PC-9 (cell line): ENCODE measurements at regions of chr17 and their contacts with region 1.

Region 1: DNA sequence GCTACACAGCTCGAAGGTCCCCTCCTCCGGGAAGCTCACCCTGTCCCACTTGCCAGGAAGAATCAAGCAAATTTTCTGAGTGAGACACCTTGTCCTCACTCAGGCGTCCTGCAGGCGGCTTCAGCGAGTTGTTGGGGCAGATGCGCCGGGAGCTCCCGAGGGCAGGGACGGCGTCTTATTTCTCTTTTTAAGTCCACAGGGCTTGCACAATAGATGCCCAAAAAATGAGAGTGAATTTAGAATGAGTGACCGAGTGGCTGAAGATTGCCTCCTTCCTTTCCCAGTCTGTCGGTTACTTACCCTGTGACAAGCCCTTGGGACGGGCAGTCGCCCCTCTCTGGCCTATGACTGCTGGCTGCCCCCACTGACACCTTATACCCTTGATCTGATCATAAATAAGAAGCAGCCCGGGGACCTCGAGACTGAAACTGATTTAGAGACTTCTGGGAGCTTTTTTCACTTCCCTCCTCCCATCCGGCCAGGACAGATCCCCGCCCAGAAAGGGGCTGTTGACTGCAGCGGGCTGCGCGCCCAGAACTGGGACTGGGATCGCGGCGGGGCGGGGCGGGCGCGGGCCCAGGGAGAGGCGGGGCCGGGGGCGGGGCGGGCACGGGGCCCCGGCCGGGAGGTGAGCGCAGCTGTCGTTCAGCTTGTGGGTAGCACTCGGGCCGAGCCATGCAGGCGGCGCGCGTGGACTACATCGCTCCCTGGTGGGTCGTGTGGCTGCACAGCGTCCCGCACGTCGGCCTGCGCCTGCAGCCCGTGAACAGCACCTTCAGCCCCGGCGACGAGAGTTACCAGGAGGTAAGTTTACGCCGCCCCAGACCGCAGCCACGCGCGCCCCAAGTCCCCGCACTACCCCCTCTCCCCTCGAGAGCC is at the start of gene TTYH2:
- DNase-seq: peak; percentile 70 to 83
- H3K4me3 ChIP-seq: peak within 1 kb of the TSS; percentile 64; the same call in 1 of the 2 replicates
- H3K27ac ChIP-seq: no peak within 1 kb of the TSS
- H3K4me1 ChIP-seq: peaks cover 4% of the 10 kb centered on the region; the same call in 1 of the 2 replicates
- H3K27me3 ChIP-seq: peaks cover 13% of the 10 kb centered on the region
- CTCF ChIP-seq: no peak; the same call in 1 of the 2 replicates
- total RNA-seq, gene TTYH2: 1.5 and 2.9 TPM in 2 replicates

Region 2: DNA sequence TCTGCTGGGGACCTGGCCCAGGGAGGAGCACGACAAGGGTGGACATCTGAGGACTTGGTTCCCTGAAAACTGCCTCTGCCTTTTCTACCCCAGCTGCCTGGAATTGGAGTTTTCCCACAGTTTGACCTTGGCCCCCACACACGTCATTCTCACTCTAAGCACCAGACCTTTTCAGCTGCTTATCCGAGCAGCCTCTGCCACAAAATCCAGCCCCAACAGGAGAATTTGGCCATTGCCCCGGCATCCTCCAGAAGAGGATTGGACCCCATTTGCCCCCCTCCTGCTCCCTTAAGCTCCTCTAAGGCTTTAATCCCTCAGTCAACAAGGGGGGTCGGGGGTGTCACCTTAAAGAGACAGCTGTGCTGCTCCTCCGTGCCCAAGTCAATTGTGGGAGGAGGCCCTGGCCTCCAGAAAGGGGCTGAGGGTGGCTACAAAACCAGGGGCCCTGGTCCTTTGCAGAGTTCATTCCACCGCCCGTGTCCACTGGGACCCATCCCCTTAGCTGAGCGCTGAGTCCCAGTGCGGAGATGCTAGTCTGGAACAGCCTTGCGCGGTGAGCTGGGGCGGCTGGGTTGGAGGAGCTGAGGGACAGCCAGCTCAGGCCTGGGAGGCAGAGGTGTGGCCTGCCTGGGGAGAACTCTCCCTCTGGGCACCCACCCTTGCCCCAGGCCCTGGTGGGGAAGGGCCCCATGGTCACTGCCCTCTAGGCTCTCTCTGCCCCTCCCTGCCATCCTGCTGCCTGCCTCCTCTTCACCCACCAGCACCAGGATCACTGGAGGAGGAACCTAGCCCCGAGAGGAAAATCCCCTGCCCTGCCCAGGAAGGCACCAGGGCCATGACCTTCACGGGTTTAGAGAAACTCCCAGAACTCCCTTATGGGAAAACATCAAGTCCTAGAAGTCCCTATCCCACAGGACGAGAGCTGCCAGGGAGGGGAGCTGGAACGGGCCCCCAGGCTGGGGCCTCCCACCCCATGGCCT is 19.1 kb after region 1 on chr17:
- CTCF ChIA-PET with region 1: no interaction called
- POLR2A ChIA-PET with region 1: no interaction called
- intact Hi-C with region 1: no loop called
- DNase-seq: no peak
- H3K4me3 ChIP-seq: no peak overlapping the region
- H3K27ac ChIP-seq: no peak overlapping the region
- H3K4me1 ChIP-seq: peaks cover 23% of the 10 kb centered on the region
- H3K27me3 ChIP-seq: peaks cover 64% of the 10 kb centered on the region
- CTCF ChIP-seq: no peak

Region 3: GRCh38 chr17:74245145-74245831 is 32.1 kb after region 1 on chr17:
- CTCF ChIA-PET with region 1: no interaction called
- POLR2A ChIA-PET with region 1: no interaction called
- intact Hi-C with region 1: no loop called
- DNase-seq: no peak
- H3K4me3 ChIP-seq: no peak overlapping the region
- H3K27ac ChIP-seq: no peak overlapping the region
- H3K4me1 ChIP-seq: no peaks in the 10 kb centered on the region
- H3K27me3 ChIP-seq: peaks cover 92% of the 10 kb centered on the region
- CTCF ChIP-seq: no peak

Region 4: GRCh38 chr17:74259667-74260524 is 46.7 kb after region 1 on chr17:
- CTCF ChIA-PET with region 1: interaction called, 3 read pairs
- POLR2A ChIA-PET with region 1: no interaction called
- intact Hi-C with region 1: loop called (anchors 2 kb)
- DNase-seq: no peak
- H3K4me3 ChIP-seq: no peak overlapping the region
- H3K27ac ChIP-seq: no peak overlapping the region
- H3K4me1 ChIP-seq: no peaks in the 10 kb centered on the region
- H3K27me3 ChIP-seq: peaks cover 85% of the 10 kb centered on the region
- CTCF ChIP-seq: peak; percentile 37; the same call in 1 of the 2 replicates

Region 5: GRCh38 chr17:74280093-74280513 is 67.0 kb after region 1 on chr17:
- CTCF ChIA-PET with region 1: interaction called, 13 read pairs
- POLR2A ChIA-PET with region 1: no interaction called
- intact Hi-C with region 1: loop called (anchors 5 kb)
- DNase-seq: no peak
- H3K4me3 ChIP-seq: no peak overlapping the region
- H3K27ac ChIP-seq: no peak overlapping the region
- H3K4me1 ChIP-seq: no peaks in the 10 kb centered on the region; the same call in 1 of the 2 replicates
- H3K27me3 ChIP-seq: peaks cover 56% of the 10 kb centered on the region
- CTCF ChIP-seq: no peak

Region 6: DNA sequence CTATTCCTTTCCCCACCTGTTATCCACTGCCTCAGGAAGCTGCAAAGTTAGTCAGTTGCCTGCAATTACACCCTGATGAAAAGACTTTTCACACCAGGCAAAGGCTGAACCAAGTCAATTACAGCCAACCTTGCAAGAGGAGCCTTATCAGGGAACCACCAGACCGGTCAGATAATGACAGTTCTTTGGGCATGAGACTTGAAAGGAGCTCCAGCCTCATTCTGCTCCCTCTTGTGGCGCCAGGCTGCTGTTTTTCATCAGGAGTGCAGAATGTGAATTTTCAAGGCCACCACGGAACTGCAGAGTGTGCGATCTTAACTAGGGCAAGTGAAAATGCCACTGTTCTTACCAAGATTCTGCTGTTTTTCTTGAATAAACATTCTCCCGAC is 83.4 kb after region 1 on chr17:
- CTCF ChIA-PET with region 1: no interaction called
- POLR2A ChIA-PET with region 1: interaction called, 9 read pairs
- intact Hi-C with region 1: loop called (anchors 2 kb)
- DNase-seq: peak; percentile 31 to 51
- H3K4me3 ChIP-seq: no peak overlapping the region
- H3K27ac ChIP-seq: no peak overlapping the region
- H3K4me1 ChIP-seq: no peaks in the 10 kb centered on the region
- H3K27me3 ChIP-seq: peaks cover 42% of the 10 kb centered on the region; the same call in 1 of the 2 replicates
- CTCF ChIP-seq: peak; percentile 49

Region 7: GRCh38 chr17:74368092-74369081 is 155.2 kb after region 1 on chr17:
- CTCF ChIA-PET with region 1: no interaction called
- POLR2A ChIA-PET with region 1: no interaction called
- intact Hi-C with region 1: loop called (anchors 5 kb)
- DNase-seq: peak in 1 of 2 experiments; percentile 60
- H3K4me3 ChIP-seq: no peak overlapping the region
- H3K27ac ChIP-seq: no peak overlapping the region
- H3K4me1 ChIP-seq: no peaks in the 10 kb centered on the region
- H3K27me3 ChIP-seq: peaks cover 80% of the 10 kb centered on the region
- CTCF ChIP-seq: peak; percentile 97